ENCODE measurements at regions of chr2 and their contacts with region 1.

Region 1: GRCh38 chr2:221124532-221125240 is 447.4 kb downstream of the EPHA4 start:
- DNase-seq: peak; percentile 96
- H3K4me3 ChIP-seq: peak overlapping the region; percentile 43 to 50 (median 48)
- H3K27ac ChIP-seq: peak overlapping the region; percentile 69
- H3K4me1 ChIP-seq: peaks cover 21% of the 10 kb centered on the region
- H3K27me3 ChIP-seq: no peaks in the 10 kb centered on the region
- CTCF ChIP-seq: no peak

Region 2: DNA sequence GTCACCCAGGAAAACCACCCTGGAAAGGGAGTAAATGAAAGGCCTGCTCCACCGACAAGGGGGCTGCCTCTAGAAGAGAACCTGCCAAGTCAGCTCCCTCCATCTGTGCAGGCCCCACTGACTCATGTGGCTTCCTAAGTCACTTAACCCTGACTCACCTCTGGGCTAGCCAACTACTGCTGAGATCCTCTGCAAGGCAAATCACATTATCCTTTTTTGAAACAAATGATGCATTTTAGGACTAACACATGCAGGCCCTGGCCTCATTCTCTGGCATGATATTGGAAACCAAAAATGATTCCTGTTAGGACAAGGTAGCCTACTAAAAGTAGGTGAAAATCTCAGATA is 27.1 kb before region 1 on chr2:
- CTCF ChIA-PET with region 1: no interaction called
- dilution Hi-C with region 1: no loop called
- in situ Hi-C with region 1: no loop called
- intact Hi-C with region 1: loop called (anchors 2 kb)
- DNase-seq: peak; percentile 74
- H3K4me3 ChIP-seq: no peak overlapping the region
- H3K27ac ChIP-seq: no peak overlapping the region
- H3K4me1 ChIP-seq: peaks cover 20% of the 10 kb centered on the region
- H3K27me3 ChIP-seq: no peaks in the 10 kb centered on the region
- CTCF ChIP-seq: no peak

Region 3: GRCh38 chr2:221267773-221268425 is 143.2 kb after region 1 on chr2:
- CTCF ChIA-PET with region 1: no interaction called
- dilution Hi-C with region 1: no loop called
- in situ Hi-C with region 1: no loop called
- intact Hi-C with region 1: no loop called
- DNase-seq: no peak
- H3K4me3 ChIP-seq: no peak overlapping the region
- H3K27ac ChIP-seq: no peak overlapping the region
- H3K4me1 ChIP-seq: no peaks in the 10 kb centered on the region
- H3K27me3 ChIP-seq: no peaks in the 10 kb centered on the region
- CTCF ChIP-seq: no peak

Region 4: DNA sequence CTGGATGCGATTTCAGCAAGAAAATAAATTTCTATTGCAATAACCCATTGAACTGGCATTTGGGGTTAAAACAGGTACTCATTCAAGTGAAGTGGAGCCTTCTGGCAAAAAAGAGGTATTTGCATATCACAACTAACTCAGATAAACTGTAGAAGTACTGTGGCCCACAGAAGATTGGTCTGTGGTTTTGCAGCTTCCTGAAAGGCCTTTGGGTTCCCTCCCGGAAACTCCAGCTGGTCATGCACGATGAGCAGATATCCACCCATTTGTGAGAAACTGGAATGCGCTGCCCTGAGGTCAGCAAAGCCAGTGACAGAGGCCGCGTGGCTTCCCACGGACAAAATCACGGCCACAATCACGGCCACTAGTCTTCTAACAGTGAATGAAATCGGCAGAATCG is 341.1 kb after region 1 on chr2:
- CTCF ChIA-PET with region 1: no interaction called
- dilution Hi-C with region 1: no loop called
- in situ Hi-C with region 1: no loop called
- intact Hi-C with region 1: no loop called
- DNase-seq: no peak
- H3K4me3 ChIP-seq: no peak overlapping the region
- H3K27ac ChIP-seq: no peak overlapping the region
- H3K4me1 ChIP-seq: peaks cover 5% of the 10 kb centered on the region
- H3K27me3 ChIP-seq: no peaks in the 10 kb centered on the region
- CTCF ChIP-seq: no peak

Region 5: DNA sequence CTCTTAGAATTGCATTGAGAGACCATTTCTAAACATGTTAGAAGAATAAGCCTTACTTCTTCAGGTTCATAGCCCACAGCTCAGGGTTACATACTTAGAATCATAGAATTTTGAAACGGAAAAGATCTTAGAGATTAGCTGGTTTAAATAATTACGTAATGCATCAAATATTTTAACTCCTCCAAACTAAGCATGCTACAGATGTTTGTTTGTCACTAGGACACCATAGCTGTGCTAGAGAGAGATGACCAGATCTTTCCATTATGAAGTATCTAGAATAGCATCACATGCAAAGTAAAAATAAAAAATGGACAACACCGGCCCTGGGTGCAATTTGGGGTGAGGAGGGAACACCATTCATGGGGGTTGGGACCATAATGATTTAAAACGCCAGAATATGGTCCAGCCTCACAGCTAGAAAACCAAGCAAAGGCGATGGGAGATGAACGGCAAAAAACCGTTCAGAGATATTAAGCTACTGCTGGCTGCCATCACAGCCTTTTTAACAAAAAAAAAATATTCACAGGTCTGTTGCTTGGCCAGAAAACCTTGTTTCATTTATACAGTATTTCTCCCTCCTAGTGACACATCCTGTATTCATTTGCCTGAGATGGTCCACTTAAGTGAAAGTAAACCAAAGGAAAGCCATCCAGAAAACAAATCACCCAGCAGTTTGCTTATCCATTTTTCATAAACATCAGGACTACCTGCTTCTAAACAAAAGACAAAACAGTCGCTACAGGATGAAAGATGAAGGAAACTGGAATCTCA is 353.2 kb after region 1 on chr2:
- CTCF ChIA-PET with region 1: no interaction called
- dilution Hi-C with region 1: no loop called
- in situ Hi-C with region 1: no loop called
- intact Hi-C with region 1: no loop called
- DNase-seq: no peak
- H3K4me3 ChIP-seq: no peak overlapping the region
- H3K27ac ChIP-seq: no peak overlapping the region
- H3K4me1 ChIP-seq: peaks cover 8% of the 10 kb centered on the region
- H3K27me3 ChIP-seq: no peaks in the 10 kb centered on the region
- CTCF ChIP-seq: no peak

Region 6: DNA sequence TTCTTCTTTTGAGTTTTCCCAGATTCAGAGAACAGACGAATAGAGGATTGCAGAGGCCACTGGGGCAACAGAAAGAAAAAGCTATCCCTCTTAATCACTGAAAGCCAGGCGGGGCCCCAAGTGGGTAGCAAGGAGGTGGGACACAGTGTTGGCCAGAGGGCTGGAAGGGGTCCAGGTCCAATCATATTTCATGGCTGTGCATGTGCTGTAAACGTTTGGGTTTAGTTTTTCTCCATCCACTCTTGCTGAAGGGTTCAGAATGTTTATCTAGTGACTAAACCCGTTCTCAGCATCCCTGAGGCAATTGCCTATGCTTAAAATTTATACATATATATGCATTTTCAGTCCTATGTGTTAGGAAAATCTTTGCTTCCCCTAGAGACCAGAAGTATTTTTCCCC is 546.8 kb after region 1 on chr2:
- CTCF ChIA-PET with region 1: no interaction called
- dilution Hi-C with region 1: no loop called
- in situ Hi-C with region 1: no loop called
- intact Hi-C with region 1: no loop called
- DNase-seq: peak; percentile 4
- H3K4me3 ChIP-seq: no peak overlapping the region
- H3K27ac ChIP-seq: no peak overlapping the region
- H3K4me1 ChIP-seq: no peaks in the 10 kb centered on the region
- H3K27me3 ChIP-seq: no peaks in the 10 kb centered on the region
- CTCF ChIP-seq: no peak

Measured in mammary epithelial cell (primary cell).